HepG2 (cell line): ENCODE measurements at regions of chrX and their contacts with region 1.

Region 1: GRCh38 chrX:136546371-136546781 is 14.4 kb downstream of the VGLL1 start:
- DNase-seq: no peak
- ATAC-seq: no peak
- H3K4me3 ChIP-seq: no peak overlapping the region
- H3K27ac ChIP-seq: no peak overlapping the region
- H3K4me1 ChIP-seq: no peaks in the 10 kb centered on the region
- H3K27me3 ChIP-seq: no peaks in the 10 kb centered on the region
- CTCF ChIP-seq: no peak
- EP300 ChIP-seq: no peak
- POLR2A ChIP-seq: no peak
- RAD21 ChIP-seq: no peak

Region 2: GRCh38 chrX:136572030-136572429 is 25.7 kb after region 1 on chrX:
- CTCF ChIA-PET with region 1: no interaction called
- POLR2A ChIA-PET with region 1: no interaction called
- in situ Hi-C with region 1: no loop called
- intact Hi-C with region 1: loop called (anchors 1 kb)
- DNase-seq: no peak
- ATAC-seq: no peak
- H3K4me3 ChIP-seq: no peak overlapping the region
- H3K27ac ChIP-seq: no peak overlapping the region
- H3K4me1 ChIP-seq: 0 out of 2 replicates have a peak, but pooled peaks cover 7% of the 10 kb centered on the region
- H3K27me3 ChIP-seq: no peaks in the 10 kb centered on the region
- CTCF ChIP-seq: no peak
- EP300 ChIP-seq: no peak
- POLR2A ChIP-seq: no peak
- RAD21 ChIP-seq: no peak